ENCODE measurements at regions of chr2 and their contacts with region 1.

Region 1: DNA sequence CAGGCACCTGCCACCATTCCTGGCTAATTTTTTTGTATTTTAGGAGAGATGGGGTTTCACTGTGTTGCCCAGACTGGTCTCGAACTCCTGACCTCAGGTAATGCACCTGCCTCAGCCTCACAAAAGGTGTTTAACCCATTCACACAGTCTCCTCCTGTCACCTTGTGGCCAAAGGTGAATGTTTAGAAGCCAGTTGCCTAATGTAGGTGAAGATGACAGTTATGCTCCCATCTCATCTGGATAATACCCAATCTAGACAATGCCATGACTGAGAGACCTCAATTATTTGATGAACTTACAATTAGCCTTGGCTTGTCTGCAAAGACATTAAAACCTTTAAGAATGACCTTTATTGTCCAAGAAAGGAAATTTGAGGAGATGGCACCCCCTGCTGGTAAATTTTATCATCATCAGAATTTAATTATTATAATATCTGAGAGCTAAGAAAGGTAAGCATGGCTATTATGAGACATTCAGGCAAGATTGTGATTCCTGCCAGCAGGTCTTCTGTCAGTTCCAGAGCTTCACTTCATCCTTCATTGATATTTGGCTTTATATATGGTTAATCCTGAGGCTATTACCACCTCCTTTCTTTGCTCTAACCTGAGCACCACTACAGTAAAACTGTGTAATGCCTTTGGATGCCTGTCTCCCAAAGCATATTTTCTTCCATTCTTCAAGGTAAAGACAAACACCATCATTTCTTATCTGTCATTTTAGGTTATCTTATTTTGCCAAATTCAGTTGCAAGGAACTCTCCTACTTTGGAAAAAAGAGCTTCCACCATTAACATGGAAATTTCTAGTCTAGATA is 117.6 kb downstream of the FAM124B start:
- DNase-seq: peak in 1 of 3 donors; percentile 37
- ATAC-seq: peak; percentile 16 to 18
- H3K4me3 ChIP-seq: no peak overlapping the region
- H3K27ac ChIP-seq: no peak overlapping the region
- H3K4me1 ChIP-seq: peaks cover 4% of the 10 kb centered on the region
- H3K27me3 ChIP-seq: no peaks in the 10 kb centered on the region

Region 2: DNA sequence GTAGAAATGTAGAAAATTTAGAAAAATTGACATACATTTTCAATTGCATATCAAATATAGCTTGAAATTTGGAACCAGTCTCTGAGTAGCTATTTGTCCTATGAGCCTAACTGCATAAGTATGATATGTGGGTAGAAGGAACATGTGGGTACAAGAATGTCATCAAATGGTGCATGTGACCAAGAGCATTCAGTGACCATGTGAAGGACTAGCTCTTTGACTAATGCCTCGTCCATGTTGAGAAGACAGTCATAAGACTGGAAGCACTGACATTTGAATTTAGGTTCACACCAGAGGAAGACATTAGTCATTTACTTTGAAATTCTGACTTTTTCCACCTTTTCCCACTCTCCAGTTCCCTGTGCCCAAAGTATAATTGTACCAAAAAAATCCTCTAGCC is 314.5 kb before region 1 on chr2:
- intact Hi-C with region 1: loop called in 1 of 4 experiments (anchors 5 kb)
- DNase-seq: no peak
- ATAC-seq: no peak
- H3K4me3 ChIP-seq: no peak overlapping the region
- H3K27ac ChIP-seq: no peak overlapping the region
- H3K4me1 ChIP-seq: no peaks in the 10 kb centered on the region
- H3K27me3 ChIP-seq: no peaks in the 10 kb centered on the region

Region 3: GRCh38 chr2:223993621-223994232 is 290.6 kb before region 1 on chr2:
- intact Hi-C with region 1: loop called (anchors 5 to 10 kb)
- DNase-seq: peak in 2 of 3 donors; percentile 55 to 78
- ATAC-seq: peak; percentile 85 to 91
- H3K4me3 ChIP-seq: no peak overlapping the region
- H3K27ac ChIP-seq: no peak overlapping the region
- H3K4me1 ChIP-seq: no peaks in the 10 kb centered on the region
- H3K27me3 ChIP-seq: no peaks in the 10 kb centered on the region

Region 4: GRCh38 chr2:224039124-224039940 is 245.0 kb before region 1 on chr2 and contains the start of gene SERPINE2:
- intact Hi-C with region 1: loop called in 1 of 4 experiments (anchors 5 kb)
- DNase-seq: peak; percentile 74 to 87 (median 84)
- ATAC-seq: peak; percentile 81 to 87
- H3K4me3 ChIP-seq: peak within 1 kb of the TSS; percentile 72
- H3K27ac ChIP-seq: no peak within 1 kb of the TSS
- H3K4me1 ChIP-seq: peaks cover 3% of the 10 kb centered on the region
- H3K27me3 ChIP-seq: no peaks in the 10 kb centered on the region
- total RNA-seq, gene SERPINE2: 15.4 to 49.4 (median 25.6) TPM